PC-9 (cell line): ENCODE measurements at regions of chr6 and their contacts with region 1.

Region 1: GRCh38 chr6:163281656-163282055 is 132.9 kb upstream of the QKI start:
- DNase-seq: peak; percentile 9 to 91
- H3K4me3 ChIP-seq: peak overlapping the region; percentile 4; the same call in 1 of the 2 replicates
- H3K27ac ChIP-seq: peak overlapping the region; percentile 68
- H3K4me1 ChIP-seq: peaks cover 26% of the 10 kb centered on the region
- H3K27me3 ChIP-seq: no peaks in the 10 kb centered on the region
- CTCF ChIP-seq: no peak

Region 2: GRCh38 chr6:162964488-162965140 is 317.0 kb before region 1 on chr6:
- CTCF ChIA-PET with region 1: no interaction called
- POLR2A ChIA-PET with region 1: no interaction called
- intact Hi-C with region 1: no loop called
- DNase-seq: no peak
- H3K4me3 ChIP-seq: no peak overlapping the region
- H3K27ac ChIP-seq: no peak overlapping the region
- H3K4me1 ChIP-seq: no peaks in the 10 kb centered on the region
- H3K27me3 ChIP-seq: peaks cover 23% of the 10 kb centered on the region
- CTCF ChIP-seq: no peak

Region 3: GRCh38 chr6:163392533-163392932 is 110.9 kb after region 1 on chr6:
- CTCF ChIA-PET with region 1: no interaction called
- POLR2A ChIA-PET with region 1: interaction called, 4 read pairs
- intact Hi-C with region 1: loop called (anchors 1 kb)
- DNase-seq: peak; percentile 51 to 81
- H3K4me3 ChIP-seq: peak overlapping the region; percentile 55
- H3K27ac ChIP-seq: peak overlapping the region; percentile 98
- H3K4me1 ChIP-seq: peaks cover 42% of the 10 kb centered on the region
- H3K27me3 ChIP-seq: no peaks in the 10 kb centered on the region
- CTCF ChIP-seq: no peak